CD4-positive, alpha-beta T cell (primary cell): ENCODE measurements at regions of chr7 and their contacts with region 1.

Region 1: GRCh38 chr7:92827464-92828120 is 8.8 kb downstream of the CDK6 start:
- DNase-seq: no peak
- ATAC-seq: no peak
- H3K4me3 ChIP-seq: no peak overlapping the region
- H3K4me3 Mint-ChIP-seq: no peak overlapping the region
- H3K27ac ChIP-seq: no peak overlapping the region
- H3K27ac Mint-ChIP-seq: no peak overlapping the region
- H3K4me1 ChIP-seq: peaks cover 25% of the 10 kb centered on the region
- H3K4me1 Mint-ChIP-seq: peaks cover 68% of the 10 kb centered on the region
- H3K27me3 ChIP-seq: no peaks in the 10 kb centered on the region
- H3K27me3 Mint-ChIP-seq: no peaks in the 10 kb centered on the region
- CTCF ChIP-seq: no peak

Region 2: DNA sequence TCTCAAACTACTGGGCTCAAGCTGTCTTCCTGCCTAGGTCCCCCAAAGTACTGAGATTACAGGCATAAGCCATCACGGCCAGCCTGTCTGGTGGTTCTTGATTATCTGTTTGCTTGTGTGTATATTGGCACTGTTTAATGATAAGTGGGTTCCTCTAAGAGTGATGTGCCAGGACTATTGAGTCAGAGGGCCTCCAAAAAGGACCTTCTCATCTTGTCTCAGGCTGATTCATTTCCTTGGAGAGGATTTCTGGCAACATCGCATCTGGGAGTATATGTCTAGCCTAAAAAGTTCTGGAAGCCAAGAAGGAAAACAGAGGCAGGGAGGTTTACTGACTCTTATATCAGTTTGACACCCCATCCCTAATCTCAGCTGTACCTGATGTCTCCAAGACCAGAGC is 914.0 kb before region 1 on chr7:
- CTCF ChIA-PET with region 1: no interaction called
- POLR2A ChIA-PET with region 1: no interaction called
- intact Hi-C with region 1: no loop called
- DNase-seq: no peak
- ATAC-seq: no peak
- H3K4me3 ChIP-seq: no peak overlapping the region
- H3K4me3 Mint-ChIP-seq: no peak overlapping the region
- H3K27ac ChIP-seq: no peak overlapping the region
- H3K27ac Mint-ChIP-seq: no peak overlapping the region
- H3K4me1 ChIP-seq: no peaks in the 10 kb centered on the region
- H3K4me1 Mint-ChIP-seq: no peaks in the 10 kb centered on the region
- H3K27me3 ChIP-seq: no peaks in the 10 kb centered on the region
- H3K27me3 Mint-ChIP-seq: peaks cover 17% of the 10 kb centered on the region
- CTCF ChIP-seq: no peak

Region 3: DNA sequence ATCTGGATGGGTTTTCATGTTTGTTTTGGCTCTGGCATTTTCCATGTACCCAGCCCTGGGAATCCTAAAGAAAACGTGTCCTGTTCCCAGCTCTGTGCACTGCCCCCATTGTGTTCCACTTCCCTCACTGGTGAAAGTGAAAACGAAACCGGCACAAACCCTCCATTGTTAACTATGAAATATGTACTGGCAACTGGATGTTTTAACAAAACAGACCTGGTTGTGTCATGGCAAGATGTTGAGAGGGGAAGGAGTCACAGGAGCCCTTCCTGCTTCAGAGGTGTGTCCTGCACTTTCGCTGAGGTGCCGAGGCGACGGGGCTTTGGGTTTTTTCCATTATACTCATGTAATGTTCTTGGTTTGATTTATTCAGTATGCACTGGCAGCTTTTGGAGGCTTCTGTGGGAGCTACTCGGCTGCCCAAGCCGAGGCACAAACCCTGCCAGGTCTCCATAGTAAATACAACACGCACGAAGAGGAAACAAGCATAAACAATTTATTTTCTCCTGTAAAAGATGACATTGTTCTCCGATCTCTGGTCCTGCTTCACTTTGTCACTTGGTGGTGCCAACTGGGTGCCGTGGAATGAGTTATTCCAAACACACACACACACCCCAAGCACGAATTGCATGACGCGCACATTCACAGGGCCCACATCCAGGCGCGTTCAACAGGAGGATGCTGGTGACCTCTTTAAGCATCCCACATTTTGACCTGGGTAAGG is 109.4 kb before region 1 on chr7:
- CTCF ChIA-PET with region 1: interaction called, 13 read pairs
- POLR2A ChIA-PET with region 1: no interaction called
- intact Hi-C with region 1: loop called in 1 of 2 experiments (anchors 10 kb)
- DNase-seq: peak in 13 of 14 experiments; percentile 8 to 82 (median 19)
- ATAC-seq: peak; percentile 90
- H3K4me3 ChIP-seq: peak overlapping the region; percentile 50
- H3K4me3 Mint-ChIP-seq: peak overlapping the region; percentile 89
- H3K27ac ChIP-seq: no peak overlapping the region
- H3K27ac Mint-ChIP-seq: peak overlapping the region; percentile 77
- H3K4me1 ChIP-seq: peaks cover 13% of the 10 kb centered on the region
- H3K4me1 Mint-ChIP-seq: peaks cover 25% of the 10 kb centered on the region
- H3K27me3 ChIP-seq: no peaks in the 10 kb centered on the region
- H3K27me3 Mint-ChIP-seq: no peaks in the 10 kb centered on the region
- CTCF ChIP-seq: no peak

Region 4: DNA sequence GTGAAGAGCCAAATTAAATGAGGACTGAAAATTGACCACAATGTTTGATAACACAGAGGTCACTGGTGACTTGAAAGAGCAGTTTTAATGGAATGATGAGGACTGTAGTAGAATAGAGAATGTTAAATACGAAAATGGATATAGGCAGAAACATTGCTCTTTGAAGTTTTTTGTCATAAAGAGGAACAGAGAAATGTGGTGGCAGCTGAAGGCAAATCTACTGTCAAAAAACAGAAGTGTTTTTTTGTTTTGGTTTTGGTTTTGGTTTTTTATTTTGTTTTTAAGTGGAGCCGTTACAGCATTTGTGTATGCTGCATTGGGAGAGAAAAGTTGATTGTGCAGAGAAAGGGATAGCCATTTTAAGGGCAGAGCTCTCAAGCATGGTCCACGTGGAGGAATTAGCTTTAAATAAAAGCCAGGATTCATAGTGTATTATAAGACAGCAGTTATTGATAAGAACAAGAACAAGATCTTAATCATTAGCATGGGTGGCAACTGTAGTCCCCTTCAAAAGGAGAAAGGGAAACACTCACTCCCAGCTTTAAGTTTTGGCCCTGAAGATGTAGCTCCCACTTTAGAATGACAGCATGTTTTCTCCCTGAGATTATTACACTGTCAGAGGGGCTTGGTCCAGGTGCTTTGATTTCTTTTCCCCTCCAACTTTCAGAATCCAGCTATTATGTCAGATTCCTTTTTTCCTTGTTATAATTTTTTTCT is 1333.3 kb after region 1 on chr7:
- CTCF ChIA-PET with region 1: no interaction called
- POLR2A ChIA-PET with region 1: no interaction called
- intact Hi-C with region 1: no loop called
- DNase-seq: peak in 3 of 14 experiments; percentile 5 to 6 (median 6)
- ATAC-seq: no peak
- H3K4me3 ChIP-seq: no peak overlapping the region
- H3K4me3 Mint-ChIP-seq: no peak overlapping the region
- H3K27ac ChIP-seq: no peak overlapping the region
- H3K27ac Mint-ChIP-seq: no peak overlapping the region
- H3K4me1 ChIP-seq: no peaks in the 10 kb centered on the region
- H3K4me1 Mint-ChIP-seq: peaks cover 6% of the 10 kb centered on the region
- H3K27me3 ChIP-seq: no peaks in the 10 kb centered on the region
- H3K27me3 Mint-ChIP-seq: no peaks in the 10 kb centered on the region
- CTCF ChIP-seq: no peak